ENCODE measurements at regions of chr2 and their contacts with region 1.

Region 1: DNA sequence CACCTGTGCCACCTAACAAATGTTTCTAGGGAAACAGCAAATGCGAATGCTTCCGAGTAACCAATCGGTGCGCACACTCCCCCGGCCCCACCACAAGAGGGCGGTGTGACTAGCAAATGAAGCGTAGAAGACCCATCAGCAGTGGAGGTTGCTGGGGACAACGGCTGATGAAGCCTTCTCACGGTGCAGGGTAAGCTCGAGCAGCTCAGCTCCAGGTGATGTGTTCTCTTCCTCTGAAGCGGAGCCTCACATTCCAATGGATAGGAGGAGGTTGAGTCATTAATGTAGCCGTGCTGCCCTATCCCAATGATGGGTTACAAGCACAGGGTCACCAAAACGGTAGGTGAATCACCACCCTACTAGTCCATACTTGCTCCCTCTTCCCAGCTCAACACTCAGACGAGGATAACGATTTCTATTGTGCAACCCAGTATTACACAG is 127.6 kb upstream of the TWIST2 start:
- DNase-seq: peak; percentile 100
- H3K4me3 ChIP-seq: no peak overlapping the region
- H3K27ac ChIP-seq: peak overlapping the region; percentile 82
- H3K4me1 ChIP-seq: peaks cover 17% of the 10 kb centered on the region
- H3K27me3 ChIP-seq: no peaks in the 10 kb centered on the region
- CTCF ChIP-seq: peak; percentile 94 to 95

Region 2: DNA sequence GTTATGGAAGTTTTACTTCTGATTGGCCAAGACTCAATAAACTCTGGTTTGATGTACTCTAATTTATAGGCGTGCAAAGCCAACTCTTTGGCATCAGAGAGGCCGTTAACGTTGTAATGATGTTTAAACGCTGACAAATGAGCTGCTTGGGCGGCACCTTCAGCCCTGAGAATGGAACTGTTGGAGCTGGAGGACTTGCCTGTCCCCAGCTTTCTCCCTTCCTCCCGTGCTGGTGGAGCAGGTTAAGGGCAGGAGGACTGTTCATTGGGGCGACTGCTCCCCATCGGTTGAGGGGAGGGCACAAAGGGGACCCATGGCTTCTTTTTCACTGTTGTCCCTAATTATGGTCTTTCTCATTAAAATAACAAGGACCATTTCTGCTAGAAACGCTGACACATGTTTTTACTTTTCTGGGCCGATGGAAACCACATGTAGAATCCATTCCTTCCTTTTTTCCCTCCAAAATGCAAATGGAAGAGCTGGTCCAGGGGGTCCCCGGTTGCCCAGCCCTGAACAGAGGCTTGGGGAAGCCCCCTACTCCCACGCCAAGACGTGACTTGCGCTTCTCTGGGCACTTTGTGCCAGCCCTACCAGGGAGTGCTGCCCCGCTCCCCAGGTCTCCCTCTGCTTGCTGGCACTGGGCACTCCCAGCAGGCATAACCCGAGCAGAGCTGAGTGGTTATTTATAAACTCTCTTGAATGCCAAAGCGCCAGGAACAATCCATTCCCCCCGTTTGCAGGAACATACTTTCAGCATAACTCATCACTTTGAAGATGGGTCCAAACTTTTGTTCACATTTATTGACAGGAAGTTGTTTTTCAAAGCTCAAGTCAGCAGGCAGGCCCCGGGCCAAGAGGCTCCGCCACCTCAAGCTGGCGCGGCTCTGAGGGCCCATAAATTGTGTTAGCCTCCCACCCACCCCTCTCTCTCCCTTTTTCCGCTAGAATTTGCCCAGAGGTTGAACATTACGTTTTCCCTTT is 123.4 kb before region 1 on chr2:
- CTCF ChIA-PET with region 1: no interaction called
- dilution Hi-C with region 1: no loop called
- in situ Hi-C with region 1: no loop called
- intact Hi-C with region 1: no loop called
- DNase-seq: peak; percentile 84
- H3K4me3 ChIP-seq: no peak overlapping the region
- H3K27ac ChIP-seq: peak overlapping the region; percentile 15
- H3K4me1 ChIP-seq: peaks cover 23% of the 10 kb centered on the region
- H3K27me3 ChIP-seq: no peaks in the 10 kb centered on the region
- CTCF ChIP-seq: no peak

Region 3: GRCh38 chr2:238636269-238637073 is 83.8 kb before region 1 on chr2:
- CTCF ChIA-PET with region 1: no interaction called
- dilution Hi-C with region 1: loop called (anchors 10 kb)
- in situ Hi-C with region 1: no loop called
- intact Hi-C with region 1: no loop called
- DNase-seq: no peak
- H3K4me3 ChIP-seq: no peak overlapping the region
- H3K27ac ChIP-seq: no peak overlapping the region
- H3K4me1 ChIP-seq: no peaks in the 10 kb centered on the region
- H3K27me3 ChIP-seq: no peaks in the 10 kb centered on the region
- CTCF ChIP-seq: no peak

Region 4: GRCh38 chr2:238684362-238685326 is 35.6 kb before region 1 on chr2:
- CTCF ChIA-PET with region 1: no interaction called
- dilution Hi-C with region 1: no loop called
- in situ Hi-C with region 1: no loop called
- intact Hi-C with region 1: loop called (anchors 1 kb)
- DNase-seq: peak; percentile 99
- H3K4me3 ChIP-seq: no peak overlapping the region
- H3K27ac ChIP-seq: peak overlapping the region; percentile 82
- H3K4me1 ChIP-seq: peaks cover 20% of the 10 kb centered on the region
- H3K27me3 ChIP-seq: no peaks in the 10 kb centered on the region
- CTCF ChIP-seq: no peak

Region 5: DNA sequence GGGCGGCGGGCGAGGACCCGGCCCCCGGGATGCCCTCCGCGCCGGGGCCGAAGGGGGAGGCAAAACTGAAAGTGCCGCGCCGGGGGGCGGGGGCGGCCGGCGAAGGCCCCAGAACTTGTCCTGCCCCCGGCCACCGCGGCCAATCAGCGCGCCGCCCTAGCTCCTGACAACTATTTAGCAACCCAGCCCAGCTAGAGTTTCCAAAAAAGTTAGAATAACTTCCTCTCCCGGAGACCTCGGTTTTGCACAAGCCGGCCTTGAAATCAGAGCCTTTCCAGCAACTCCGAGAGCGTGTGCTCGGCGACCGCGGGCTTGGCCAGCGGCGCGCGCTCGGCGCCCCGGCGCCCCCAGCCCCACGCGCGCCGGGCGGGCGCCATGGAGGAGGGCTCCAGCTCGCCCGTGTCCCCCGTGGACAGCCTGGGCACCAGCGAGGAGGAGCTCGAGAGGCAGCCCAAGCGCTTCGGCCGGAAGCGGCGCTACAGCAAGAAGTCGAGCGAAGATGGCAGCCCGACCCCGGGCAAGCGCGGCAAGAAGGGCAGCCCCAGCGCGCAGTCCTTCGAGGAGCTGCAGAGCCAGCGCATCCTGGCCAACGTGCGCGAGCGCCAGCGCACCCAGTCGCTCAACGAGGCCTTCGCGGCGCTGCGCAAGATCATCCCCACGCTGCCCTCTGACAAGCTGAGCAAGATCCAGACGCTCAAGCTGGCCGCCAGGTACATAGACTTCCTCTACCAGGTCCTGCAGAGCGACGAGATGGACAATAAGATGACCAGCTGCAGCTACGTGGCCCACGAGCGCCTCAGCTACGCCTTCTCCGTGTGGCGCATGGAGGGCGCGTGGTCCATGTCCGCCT is 127.8 kb after region 1 on chr2 and contains the start of gene TWIST2:
- CTCF ChIA-PET with region 1: no interaction called
- dilution Hi-C with region 1: no loop called
- in situ Hi-C with region 1: no loop called
- intact Hi-C with region 1: loop called (anchors 2 kb)
- DNase-seq: peak; percentile 78
- H3K4me3 ChIP-seq: peak within 1 kb of the TSS; percentile 61 to 98 (median 90)
- H3K27ac ChIP-seq: peak within 1 kb of the TSS; percentile 38
- H3K4me1 ChIP-seq: peaks cover 14% of the 10 kb centered on the region
- H3K27me3 ChIP-seq: no peaks in the 10 kb centered on the region
- CTCF ChIP-seq: no peak
- total RNA-seq, gene TWIST2: 0.83 to 17.6 TPM

Region 6: DNA sequence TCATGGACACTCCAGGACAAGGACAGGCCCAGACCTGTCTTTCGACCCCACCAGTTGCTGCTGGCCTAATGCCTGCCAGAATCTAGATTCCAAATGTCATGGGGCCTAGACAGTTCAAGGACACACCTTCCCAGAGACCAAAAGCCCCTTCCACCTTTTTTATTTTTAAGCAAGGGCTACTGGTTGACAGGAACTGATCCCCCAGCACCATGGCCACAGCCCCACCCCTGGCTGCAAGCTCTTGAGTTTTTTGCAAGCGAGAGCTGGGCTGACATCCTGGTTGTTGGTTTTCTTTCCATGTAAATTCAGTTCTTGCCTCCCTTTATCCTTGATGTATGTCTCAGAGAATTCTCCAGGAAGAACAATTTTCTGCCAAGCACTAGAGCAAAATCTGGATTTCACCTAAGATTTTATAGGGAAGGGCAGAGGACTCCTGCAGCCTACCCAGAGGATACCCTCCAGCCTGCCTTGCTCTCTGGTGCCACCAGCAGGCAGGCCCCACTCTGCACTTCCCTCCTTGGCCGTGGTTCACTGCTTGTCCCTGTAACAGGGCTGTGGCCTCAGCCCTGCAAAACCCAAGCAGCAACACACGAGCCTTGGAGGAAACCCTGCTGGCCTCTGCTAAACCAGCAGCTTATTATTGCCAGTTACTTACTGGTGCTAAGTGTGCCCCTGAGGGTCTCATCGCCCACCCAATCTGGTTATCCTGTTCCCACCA is 225.3 kb after region 1 on chr2:
- CTCF ChIA-PET with region 1: interaction called, 4 read pairs
- dilution Hi-C with region 1: no loop called
- in situ Hi-C with region 1: no loop called
- intact Hi-C with region 1: loop called (anchors 1 kb)
- DNase-seq: no peak
- H3K4me3 ChIP-seq: no peak overlapping the region
- H3K27ac ChIP-seq: no peak overlapping the region
- H3K4me1 ChIP-seq: peaks cover 55% of the 10 kb centered on the region
- H3K27me3 ChIP-seq: no peaks in the 10 kb centered on the region
- CTCF ChIP-seq: peak; percentile 77 to 93

Region 7: DNA sequence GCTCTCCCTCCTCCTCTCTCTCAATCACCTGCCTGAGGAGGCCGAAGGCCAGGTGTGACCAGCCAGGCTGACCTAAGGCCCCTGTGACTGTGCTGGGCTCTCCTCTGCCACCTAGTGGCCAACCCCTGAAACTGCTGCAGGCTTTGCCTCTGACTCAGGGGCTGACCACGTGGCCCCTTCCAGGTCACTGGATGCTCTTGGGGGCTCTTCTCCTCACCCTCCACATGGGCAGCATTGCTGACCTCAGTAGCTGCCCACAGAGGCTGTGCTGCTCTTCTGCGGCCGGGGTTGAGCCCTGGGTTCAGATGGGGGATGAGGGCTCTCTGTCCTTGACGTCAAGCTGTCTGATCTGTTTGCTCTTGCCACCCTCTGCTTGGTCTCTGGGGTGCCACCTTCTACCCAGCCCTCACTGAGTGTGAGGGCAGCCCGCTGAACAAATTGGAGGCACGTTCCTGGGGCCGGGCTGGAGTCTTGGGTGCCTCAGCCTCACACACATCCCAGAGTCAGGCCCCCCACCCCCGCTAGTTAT is 250.4 kb after region 1 on chr2:
- CTCF ChIA-PET with region 1: no interaction called
- dilution Hi-C with region 1: no loop called
- in situ Hi-C with region 1: no loop called
- intact Hi-C with region 1: loop called (anchors 1 kb)
- DNase-seq: peak; percentile 36
- H3K4me3 ChIP-seq: no peak overlapping the region
- H3K27ac ChIP-seq: no peak overlapping the region
- H3K4me1 ChIP-seq: peaks cover 21% of the 10 kb centered on the region
- H3K27me3 ChIP-seq: no peaks in the 10 kb centered on the region
- CTCF ChIP-seq: peak; percentile 100

Region 8: DNA sequence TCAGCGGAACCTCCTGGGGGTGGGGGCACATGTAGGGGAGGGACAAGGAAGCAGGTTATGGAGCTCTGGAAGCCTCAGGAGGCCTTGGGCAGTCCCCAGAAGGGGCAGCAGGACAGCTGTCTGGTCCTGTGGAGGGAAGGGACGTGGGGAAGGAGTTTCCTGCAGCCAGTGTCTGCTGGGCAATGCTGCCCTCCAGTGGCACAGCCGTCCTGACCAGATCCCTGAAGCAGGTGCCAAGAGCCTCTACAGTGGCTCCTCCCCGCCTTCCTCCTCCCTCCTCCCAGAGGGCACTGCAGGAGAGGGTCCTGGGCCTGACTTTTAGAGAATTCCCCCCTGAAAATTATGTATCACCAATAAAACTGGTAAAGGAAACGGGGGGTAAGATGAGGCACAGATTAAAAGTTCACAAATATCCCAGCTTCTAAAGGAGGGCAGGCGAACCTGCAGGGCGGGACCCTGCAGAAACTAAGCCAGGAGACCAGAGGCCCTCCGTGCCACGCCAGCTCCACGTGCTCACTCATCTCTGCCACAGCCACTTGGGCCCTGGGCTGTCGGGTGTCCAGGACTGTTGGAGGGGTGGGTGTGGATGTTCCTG is 386.2 kb after region 1 on chr2:
- CTCF ChIA-PET with region 1: no interaction called
- dilution Hi-C with region 1: no loop called
- in situ Hi-C with region 1: no loop called
- intact Hi-C with region 1: loop called (anchors 2 kb)
- DNase-seq: peak; percentile 43
- H3K4me3 ChIP-seq: no peak overlapping the region
- H3K27ac ChIP-seq: no peak overlapping the region
- H3K4me1 ChIP-seq: peaks cover 9% of the 10 kb centered on the region
- H3K27me3 ChIP-seq: no peaks in the 10 kb centered on the region
- CTCF ChIP-seq: peak; percentile 45 to 77